PC-3 (cell line): ENCODE measurements at regions of chr10 and their contacts with region 1.

Region 1: DNA sequence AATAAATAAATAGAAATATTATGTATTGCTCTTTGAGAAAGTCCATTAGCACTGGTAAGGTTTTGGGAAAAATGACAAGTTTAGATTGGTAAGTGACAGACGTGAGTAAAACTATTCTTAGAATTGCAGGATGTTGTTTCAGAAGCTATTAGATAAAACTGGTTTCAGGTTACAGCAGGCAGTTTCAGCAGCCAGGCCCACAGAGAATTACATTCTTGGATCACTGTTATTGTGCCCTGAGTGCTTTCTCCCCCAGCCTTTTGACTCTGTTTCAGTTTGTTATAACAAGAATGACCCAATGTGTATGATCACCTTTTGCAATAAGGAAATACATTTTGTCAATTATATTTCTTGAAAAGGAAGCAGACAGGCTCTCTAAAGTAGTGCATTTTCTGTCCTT is 86.5 kb downstream of the DKK1 start:
- DNase-seq: peak; percentile 42
- ATAC-seq: peak; percentile 69
- H3K4me3 ChIP-seq: no peak overlapping the region
- H3K27ac ChIP-seq: no peak overlapping the region
- H3K4me1 ChIP-seq: no peaks in the 10 kb centered on the region
- H3K27me3 ChIP-seq: no peaks in the 10 kb centered on the region
- CTCF ChIP-seq: no peak

Region 2: GRCh38 chr10:52387744-52388143 is 12.8 kb before region 1 on chr10:
- CTCF ChIA-PET with region 1: no interaction called
- POLR2A ChIA-PET with region 1: no interaction called
- intact Hi-C with region 1: loop called (anchors 2 kb)
- DNase-seq: peak; percentile 99
- ATAC-seq: peak; percentile 94
- H3K4me3 ChIP-seq: no peak overlapping the region
- H3K27ac ChIP-seq: no peak overlapping the region
- H3K4me1 ChIP-seq: peaks cover 19% of the 10 kb centered on the region
- H3K27me3 ChIP-seq: no peaks in the 10 kb centered on the region
- CTCF ChIP-seq: no peak

Region 3: DNA sequence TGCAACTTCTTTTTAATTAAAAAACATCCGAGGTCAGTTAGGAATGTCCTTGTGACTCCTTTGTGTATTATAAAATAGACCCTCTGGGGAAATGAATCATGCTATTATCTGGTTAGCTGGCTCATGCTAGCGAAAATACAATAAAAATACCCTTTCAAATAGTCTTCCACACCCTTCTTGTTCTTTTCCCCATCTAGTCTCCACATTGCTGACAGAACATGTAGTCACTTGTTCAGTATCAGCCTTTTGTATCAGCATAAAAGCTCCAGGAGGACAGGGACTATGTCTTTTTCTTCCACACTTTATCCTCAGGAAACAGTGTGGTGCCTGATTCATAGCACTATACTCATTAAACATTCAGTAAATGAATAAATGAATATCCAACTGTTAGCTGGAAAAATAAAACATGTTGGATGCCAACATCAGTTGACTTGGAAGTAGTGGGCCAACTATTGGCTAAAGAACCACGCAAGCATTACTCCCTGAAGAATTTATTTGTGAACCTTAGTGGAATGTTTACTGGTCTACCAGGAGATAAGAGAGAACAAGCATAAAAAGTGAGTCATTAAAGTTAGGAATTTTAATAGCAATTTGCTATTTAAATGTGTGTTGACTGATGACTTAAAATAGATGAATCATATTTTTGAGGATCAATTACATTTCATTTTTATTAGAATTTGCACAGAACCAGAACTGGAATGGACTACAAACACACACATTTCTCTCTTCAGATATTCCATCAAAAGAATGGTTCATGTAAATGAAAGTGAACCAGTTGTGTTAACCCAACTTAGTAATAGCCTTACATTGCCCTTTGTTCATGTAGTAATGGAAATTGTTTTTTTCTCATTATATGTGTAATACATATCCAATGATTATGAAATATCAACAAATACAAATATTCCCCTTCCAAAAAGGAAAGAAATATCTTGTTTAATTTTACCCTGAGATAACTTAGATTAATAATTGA is 43.1 kb after region 1 on chr10:
- CTCF ChIA-PET with region 1: no interaction called
- POLR2A ChIA-PET with region 1: no interaction called
- intact Hi-C with region 1: no loop called
- DNase-seq: peak; percentile 100
- ATAC-seq: peak; percentile 80
- H3K4me3 ChIP-seq: peak overlapping the region; percentile 36
- H3K27ac ChIP-seq: peak overlapping the region; percentile 82
- H3K4me1 ChIP-seq: peaks cover 62% of the 10 kb centered on the region
- H3K27me3 ChIP-seq: no peaks in the 10 kb centered on the region
- CTCF ChIP-seq: no peak